Heart left ventricle (tissue), 16 donors: ENCODE measurements at regions of chr9 and their contacts with region 1.

Region 1: DNA sequence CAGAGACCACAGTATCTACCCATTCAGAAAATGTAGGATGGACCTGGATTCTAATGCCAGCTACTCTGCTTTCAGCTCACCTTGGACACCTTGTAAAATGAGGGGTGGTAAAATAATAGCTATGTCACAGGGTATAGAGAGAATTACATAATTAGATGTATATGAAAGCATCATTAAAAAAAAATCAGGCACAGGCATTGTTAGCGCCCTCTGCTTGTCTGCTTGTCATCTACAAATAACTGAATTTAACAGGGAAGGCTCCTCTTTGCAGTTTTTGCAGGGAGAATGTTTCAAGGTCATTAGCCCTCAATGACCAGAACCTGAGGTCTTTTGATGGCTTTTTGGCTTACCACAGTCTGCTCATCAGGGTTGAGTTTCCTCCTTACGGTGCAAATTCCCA is 58.0 kb downstream of the GPR21 start:
- DNase-seq: no peak
- ATAC-seq: no peak
- H3K4me3 ChIP-seq: no peak overlapping the region
- H3K27ac ChIP-seq: no peak overlapping the region
- H3K4me1 ChIP-seq: peaks cover 0 to 7% (median 0%) of the 10 kb centered on the region in 12 donors
- H3K27me3 ChIP-seq: no peaks in the 10 kb centered on the region
- CTCF ChIP-seq: no peak
- POLR2A ChIP-seq: no peak

Region 2: GRCh38 chr9:123150708-123151503 is 59.4 kb after region 1 on chr9:
- intact Hi-C with region 1: loop called in 1 of 10 experiments (anchors 10 kb)
- DNase-seq: no peak
- ATAC-seq: no peak
- H3K4me3 ChIP-seq: no peak overlapping the region
- H3K27ac ChIP-seq: no peak overlapping the region
- H3K4me1 ChIP-seq: no peaks in the 10 kb centered on the region
- H3K27me3 ChIP-seq: no peaks in the 10 kb centered on the region
- CTCF ChIP-seq: no peak
- POLR2A ChIP-seq: no peak